Breast epithelium (tissue), 4 donors: ENCODE measurements at regions of chr1 and their contacts with region 1.

Region 1: GRCh38 chr1:30818568-30819243 is 61.1 kb upstream of the LAPTM5 start:
- DNase-seq: no peak
- H3K4me3 ChIP-seq: no peak overlapping the region
- H3K27ac ChIP-seq: no peak overlapping the region
- H3K4me1 ChIP-seq: peaks cover 12 to 18% of the 10 kb centered on the region in 2 donors
- H3K27me3 ChIP-seq: no peaks in the 10 kb centered on the region
- CTCF ChIP-seq: no peak
- POLR2A ChIP-seq: no peak

Region 2: DNA sequence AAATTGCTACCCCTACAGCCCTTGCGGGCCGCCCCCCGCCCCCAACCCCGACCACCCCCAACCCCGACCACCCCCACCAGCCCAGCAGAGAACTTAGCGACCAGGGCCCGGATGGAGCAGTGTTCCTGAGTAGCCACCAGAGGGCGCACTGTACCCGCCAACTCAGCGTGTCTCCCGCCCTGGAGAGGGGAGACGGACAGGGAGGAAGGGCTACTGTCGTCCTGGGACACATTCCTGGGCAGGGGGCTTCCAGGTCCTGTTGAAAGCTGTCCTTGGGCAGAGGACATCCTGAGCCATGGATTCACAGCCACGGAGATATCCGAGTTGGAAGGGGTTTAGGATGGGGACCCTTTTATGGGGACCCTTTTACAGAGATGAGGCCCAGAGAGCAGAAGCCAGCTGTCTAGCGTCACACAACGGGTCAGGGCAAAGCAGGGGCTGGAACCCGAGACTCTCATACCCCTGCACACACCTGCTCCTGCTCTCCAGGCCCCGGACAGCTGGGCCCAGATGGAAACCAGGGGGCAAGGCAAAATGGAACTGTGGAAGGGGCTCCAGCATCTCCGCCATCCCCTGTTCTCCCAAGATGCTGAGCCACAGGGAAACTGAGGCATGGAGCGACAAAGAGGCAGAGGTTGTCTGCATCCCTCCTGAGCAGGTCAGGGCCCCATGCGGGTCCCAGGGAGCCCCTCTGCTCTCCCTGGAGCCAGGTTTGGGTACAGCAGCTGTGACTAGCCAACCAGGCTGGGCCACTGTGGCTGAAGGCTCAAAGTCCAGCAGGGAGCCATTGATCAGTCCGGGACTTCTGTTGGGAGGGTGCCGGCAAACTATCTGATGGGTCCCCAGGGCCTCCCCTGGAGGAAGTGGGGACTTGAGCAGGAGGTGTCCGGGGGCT is 36.1 kb before region 1 on chr1:
- intact Hi-C with region 1: loop called (anchors 1 kb)
- DNase-seq: peak in 1 of 2 donors; percentile 78
- H3K4me3 ChIP-seq: peak overlapping the region in 1 of 3 donors; percentile 24
- H3K27ac ChIP-seq: no peak overlapping the region
- H3K4me1 ChIP-seq: no peaks in the 10 kb centered on the region
- H3K27me3 ChIP-seq: no peaks in the 10 kb centered on the region
- CTCF ChIP-seq: peak in 2 of 3 donors; percentile 47 to 56
- POLR2A ChIP-seq: no peak

Region 3: GRCh38 chr1:30795026-30795425 is 23.7 kb before region 1 on chr1:
- intact Hi-C with region 1: no loop called
- DNase-seq: no peak
- H3K4me3 ChIP-seq: no peak overlapping the region
- H3K27ac ChIP-seq: no peak overlapping the region
- H3K4me1 ChIP-seq: peaks cover 8% of the 10 kb centered on the region in 2 donors
- H3K27me3 ChIP-seq: no peaks in the 10 kb centered on the region
- CTCF ChIP-seq: no peak
- POLR2A ChIP-seq: no peak